Natural killer cell (primary cell): ENCODE measurements at regions of chr6 and their contacts with region 1.

Region 1: GRCh38 chr6:593139-593906 is 63.6 kb downstream of the HUS1B start:
- DNase-seq: peak; percentile 43 to 83
- ATAC-seq: peak; percentile 68 to 77 (median 68)
- H3K4me3 ChIP-seq: no peak overlapping the region
- H3K4me3 Mint-ChIP-seq: no peak overlapping the region
- H3K27ac ChIP-seq: no peak overlapping the region
- H3K27ac Mint-ChIP-seq: no peak overlapping the region
- H3K4me1 ChIP-seq: no peaks in the 10 kb centered on the region
- H3K4me1 Mint-ChIP-seq: peaks cover 0 to 4% of the 10 kb centered on the region in 2 donors
- H3K27me3 ChIP-seq: no peaks in the 10 kb centered on the region
- H3K27me3 Mint-ChIP-seq: no peaks in the 10 kb centered on the region
- CTCF ChIP-seq: peak; percentile 84

Region 2: GRCh38 chr6:722077-722524 is 128.8 kb after region 1 on chr6:
- intact Hi-C with region 1: loop called (anchors 5 kb)
- DNase-seq: peak; percentile 42 to 85
- ATAC-seq: peak; percentile 76 to 86 (median 85)
- H3K4me3 ChIP-seq: no peak overlapping the region
- H3K4me3 Mint-ChIP-seq: no peak overlapping the region
- H3K27ac ChIP-seq: no peak overlapping the region
- H3K27ac Mint-ChIP-seq: no peak overlapping the region
- H3K4me1 ChIP-seq: peaks cover 8% of the 10 kb centered on the region
- H3K4me1 Mint-ChIP-seq: peaks cover 11% of the 10 kb centered on the region in 2 donors
- H3K27me3 ChIP-seq: peaks cover 4% of the 10 kb centered on the region
- H3K27me3 Mint-ChIP-seq: peaks cover 22 to 41% of the 10 kb centered on the region in 2 donors
- CTCF ChIP-seq: peak; percentile 95

Region 3: DNA sequence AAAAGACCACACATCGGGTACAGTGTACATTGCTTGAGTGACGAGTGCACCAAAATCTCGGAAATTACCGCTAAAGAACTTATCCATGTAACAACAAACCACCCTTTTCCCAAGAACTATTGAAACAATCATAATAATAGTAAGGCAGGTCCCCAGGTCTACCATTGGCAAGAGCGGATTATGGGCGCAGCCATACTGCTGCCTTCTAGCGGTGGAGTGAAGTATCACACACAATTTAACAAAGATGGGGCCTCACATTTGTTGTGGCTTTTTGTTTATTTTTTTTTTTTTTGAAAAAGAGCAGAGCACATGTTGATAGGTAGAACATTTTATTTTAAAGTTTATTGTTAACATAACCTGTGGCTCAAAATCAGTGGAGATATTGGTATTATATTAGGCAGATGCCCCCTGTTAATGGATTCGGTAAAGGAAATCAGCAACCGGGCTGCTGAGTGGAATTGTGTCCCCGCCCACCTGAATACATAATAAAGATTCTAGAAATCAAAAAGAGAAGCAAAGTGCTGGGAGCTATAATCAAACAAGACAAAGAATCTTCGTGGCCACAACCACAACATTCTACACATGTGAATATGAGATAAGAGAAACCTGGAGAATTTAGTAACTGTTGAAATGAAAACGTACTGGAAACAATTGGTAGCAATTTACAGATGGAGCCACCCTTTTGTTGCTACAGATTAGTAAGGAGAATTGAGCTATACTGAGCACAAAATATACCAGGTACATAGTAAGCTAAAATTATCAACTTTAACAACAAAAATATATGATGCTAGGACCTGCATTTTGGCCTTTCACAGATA is 193.8 kb after region 1 on chr6:
- intact Hi-C with region 1: loop called (anchors 2 kb)
- DNase-seq: peak in 1 of 2 donors; percentile 43
- ATAC-seq: no peak
- H3K4me3 ChIP-seq: no peak overlapping the region
- H3K4me3 Mint-ChIP-seq: no peak overlapping the region
- H3K27ac ChIP-seq: no peak overlapping the region
- H3K27ac Mint-ChIP-seq: no peak overlapping the region
- H3K4me1 ChIP-seq: peaks cover 4% of the 10 kb centered on the region
- H3K4me1 Mint-ChIP-seq: peaks cover 8 to 9% of the 10 kb centered on the region in 2 donors
- H3K27me3 ChIP-seq: no peaks in the 10 kb centered on the region
- H3K27me3 Mint-ChIP-seq: peaks cover 10 to 17% of the 10 kb centered on the region in 2 donors
- CTCF ChIP-seq: peak; percentile 35

Region 4: DNA sequence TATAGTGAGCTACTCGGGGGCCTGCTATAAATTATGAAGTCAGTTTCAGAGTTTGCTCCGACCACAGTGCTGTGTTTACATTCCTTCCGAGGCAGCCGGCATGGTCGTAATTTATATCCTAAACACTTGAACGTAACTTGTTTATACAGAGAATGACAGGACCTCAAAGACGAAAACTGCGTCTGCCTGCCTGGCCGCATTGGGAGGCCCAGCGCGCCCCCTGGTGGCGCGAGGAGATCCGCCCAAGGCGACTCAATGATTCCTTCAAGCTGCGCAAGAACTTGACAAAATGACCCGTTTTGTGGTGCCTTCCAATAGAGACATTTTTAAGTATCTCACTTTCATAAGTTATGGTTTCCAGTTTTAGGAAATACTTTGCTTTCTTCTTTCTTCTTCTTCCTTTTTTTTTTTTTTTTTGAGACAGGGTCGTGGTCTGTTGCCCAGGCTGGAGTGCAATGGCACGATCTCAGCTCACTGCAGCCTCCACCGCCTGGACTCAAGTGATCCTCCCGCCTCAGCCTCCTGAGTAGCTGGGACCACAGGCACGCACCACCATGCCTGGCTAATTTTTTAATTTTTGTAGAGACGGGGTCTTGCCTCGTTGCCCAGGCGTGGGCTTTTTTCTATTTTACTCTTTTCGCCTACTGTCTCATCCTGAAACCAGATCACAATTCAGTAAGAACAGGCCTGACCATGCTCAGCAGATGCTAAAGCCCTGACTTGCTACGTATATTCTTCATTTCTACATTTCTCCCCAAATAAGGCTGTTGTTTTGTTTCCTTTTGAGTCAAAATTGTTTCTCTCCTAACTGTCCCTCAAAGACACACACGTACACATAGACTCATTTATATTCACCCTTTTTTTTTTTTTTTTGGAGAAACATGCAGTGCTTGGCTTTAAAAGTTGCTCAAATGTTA is 803.9 kb after region 1 on chr6:
- intact Hi-C with region 1: loop called (anchors 1 kb)
- DNase-seq: peak; percentile 63 to 82
- ATAC-seq: peak in 2 of 3 donors; percentile 63 to 76
- H3K4me3 ChIP-seq: no peak overlapping the region
- H3K4me3 Mint-ChIP-seq: peak overlapping the region; percentile 31
- H3K27ac ChIP-seq: no peak overlapping the region
- H3K27ac Mint-ChIP-seq: peak overlapping the region in 1 of 2 donors; percentile 15
- H3K4me1 ChIP-seq: peaks cover 12% of the 10 kb centered on the region
- H3K4me1 Mint-ChIP-seq: peaks cover 6 to 12% of the 10 kb centered on the region in 2 donors
- H3K27me3 ChIP-seq: peaks cover 28% of the 10 kb centered on the region
- H3K27me3 Mint-ChIP-seq: peaks cover 43 to 46% of the 10 kb centered on the region in 2 donors
- CTCF ChIP-seq: peak; percentile 97

Region 5: GRCh38 chr6:1436334-1437306 is 843.3 kb after region 1 on chr6:
- intact Hi-C with region 1: loop called (anchors 2 kb)
- DNase-seq: peak in 1 of 2 donors; percentile 75
- ATAC-seq: peak; percentile 75 to 85 (median 79)
- H3K4me3 ChIP-seq: no peak overlapping the region
- H3K4me3 Mint-ChIP-seq: no peak overlapping the region
- H3K27ac ChIP-seq: no peak overlapping the region
- H3K27ac Mint-ChIP-seq: no peak overlapping the region
- H3K4me1 ChIP-seq: no peaks in the 10 kb centered on the region
- H3K4me1 Mint-ChIP-seq: peaks cover 5 to 7% of the 10 kb centered on the region in 2 donors
- H3K27me3 ChIP-seq: no peaks in the 10 kb centered on the region
- H3K27me3 Mint-ChIP-seq: peaks cover 30 to 43% of the 10 kb centered on the region in 2 donors
- CTCF ChIP-seq: peak; percentile 69